ENCODE measurements at regions of chr3 and their contacts with region 1.

Region 1: GRCh38 chr3:38521391-38521987 is 25.3 kb downstream of the EXOG start:
- DNase-seq: peak; percentile 41 to 82 (median 54)
- ATAC-seq: peak; percentile 69
- H3K4me3 ChIP-seq: no peak overlapping the region
- H3K4me3 Mint-ChIP-seq: no peak overlapping the region
- H3K27ac ChIP-seq: no peak overlapping the region
- H3K27ac Mint-ChIP-seq: peak overlapping the region; percentile 57
- H3K4me1 ChIP-seq: peaks cover 16% of the 10 kb centered on the region
- H3K4me1 Mint-ChIP-seq: peaks cover 40% of the 10 kb centered on the region
- H3K27me3 ChIP-seq: no peaks in the 10 kb centered on the region
- H3K27me3 Mint-ChIP-seq: no peaks in the 10 kb centered on the region
- CTCF ChIP-seq: peak; percentile 93

Region 2: DNA sequence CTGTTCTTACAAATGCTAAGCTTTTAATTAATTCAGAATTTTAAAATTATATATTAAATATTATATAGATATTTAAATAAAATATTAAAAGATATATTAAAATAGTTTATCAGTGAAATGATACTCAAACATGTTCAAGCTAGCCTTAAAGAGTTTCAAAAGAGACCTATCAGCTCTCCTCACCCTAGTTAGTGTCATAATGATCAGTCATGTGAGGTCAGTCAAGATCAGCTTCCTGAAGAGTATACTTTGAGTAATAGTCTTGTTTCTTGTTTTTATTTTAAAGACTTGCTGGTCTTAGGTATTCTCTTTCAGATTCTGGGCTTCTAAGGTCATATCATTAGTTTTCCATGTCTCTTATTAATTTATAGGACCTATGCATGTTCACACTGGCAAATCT is 10.9 kb before region 1 on chr3:
- CTCF ChIA-PET with region 1: interaction called, 11 read pairs
- POLR2A ChIA-PET with region 1: interaction called, 6 read pairs
- intact Hi-C with region 1: no loop called
- DNase-seq: no peak
- ATAC-seq: no peak
- H3K4me3 ChIP-seq: no peak overlapping the region
- H3K4me3 Mint-ChIP-seq: no peak overlapping the region
- H3K27ac ChIP-seq: no peak overlapping the region
- H3K27ac Mint-ChIP-seq: no peak overlapping the region
- H3K4me1 ChIP-seq: no peaks in the 10 kb centered on the region
- H3K4me1 Mint-ChIP-seq: no peaks in the 10 kb centered on the region
- H3K27me3 ChIP-seq: no peaks in the 10 kb centered on the region
- H3K27me3 Mint-ChIP-seq: no peaks in the 10 kb centered on the region
- CTCF ChIP-seq: no peak

Region 3: DNA sequence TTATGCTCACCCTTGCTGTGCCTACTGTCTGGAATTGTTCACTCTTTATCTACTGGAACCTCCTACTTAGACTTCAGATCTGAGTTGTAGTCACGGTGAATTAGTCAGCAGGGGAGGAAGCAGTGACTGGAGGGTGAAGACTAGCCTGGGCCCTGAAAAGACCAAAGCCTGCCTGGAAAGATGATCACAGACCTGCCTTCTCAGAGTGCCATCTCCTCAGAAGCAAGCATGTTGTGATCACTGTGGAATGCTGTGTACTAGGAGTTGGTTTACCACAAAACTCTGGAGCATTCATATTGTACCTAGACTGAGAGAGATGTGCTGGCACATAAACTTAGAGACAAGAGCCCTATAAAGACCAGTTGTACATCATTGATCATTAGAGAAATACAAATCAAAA is 395.2 kb after region 1 on chr3:
- CTCF ChIA-PET with region 1: no interaction called
- POLR2A ChIA-PET with region 1: no interaction called
- intact Hi-C with region 1: no loop called
- DNase-seq: no peak
- ATAC-seq: no peak
- H3K4me3 ChIP-seq: no peak overlapping the region
- H3K4me3 Mint-ChIP-seq: no peak overlapping the region
- H3K27ac ChIP-seq: no peak overlapping the region
- H3K27ac Mint-ChIP-seq: no peak overlapping the region
- H3K4me1 ChIP-seq: no peaks in the 10 kb centered on the region
- H3K4me1 Mint-ChIP-seq: no peaks in the 10 kb centered on the region
- H3K27me3 ChIP-seq: no peaks in the 10 kb centered on the region
- H3K27me3 Mint-ChIP-seq: peaks cover 5% of the 10 kb centered on the region
- CTCF ChIP-seq: no peak

Region 4: DNA sequence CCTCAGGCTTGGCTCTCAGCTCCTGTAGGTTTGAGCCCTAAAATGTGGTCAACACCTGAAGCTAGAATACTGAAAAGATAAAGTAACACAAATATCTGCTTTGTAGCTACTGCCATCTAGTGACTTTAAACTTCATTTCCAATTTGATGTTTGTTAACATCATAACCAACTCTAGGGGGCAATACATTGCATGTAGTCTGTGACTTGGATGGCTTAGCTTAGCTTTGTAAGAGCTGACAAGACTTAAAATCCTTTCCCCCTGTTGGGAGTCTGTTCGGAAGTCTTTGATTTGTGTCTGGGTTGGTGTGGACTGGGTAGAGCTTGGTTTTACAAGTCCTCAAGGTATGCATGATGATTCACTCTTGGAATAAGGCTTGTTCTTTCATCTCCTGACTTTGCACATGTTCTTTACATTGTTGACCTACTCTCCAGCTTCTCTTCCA is 478.5 kb after region 1 on chr3:
- CTCF ChIA-PET with region 1: interaction called, 4 read pairs
- POLR2A ChIA-PET with region 1: no interaction called
- intact Hi-C with region 1: loop called (anchors 10 kb)
- DNase-seq: peak in 3 of 14 experiments; percentile 47 to 56 (median 51)
- ATAC-seq: peak; percentile 54
- H3K4me3 ChIP-seq: no peak overlapping the region
- H3K4me3 Mint-ChIP-seq: no peak overlapping the region
- H3K27ac ChIP-seq: no peak overlapping the region
- H3K27ac Mint-ChIP-seq: no peak overlapping the region
- H3K4me1 ChIP-seq: no peaks in the 10 kb centered on the region
- H3K4me1 Mint-ChIP-seq: no peaks in the 10 kb centered on the region
- H3K27me3 ChIP-seq: peaks cover 0 to 8% of the 10 kb centered on the region in 2 experiments
- H3K27me3 Mint-ChIP-seq: peaks cover 18% of the 10 kb centered on the region
- CTCF ChIP-seq: peak; percentile 77

Measured in CD4-positive, alpha-beta T cell (primary cell).